HepG2 (cell line): ENCODE measurements at regions of chr2 and their contacts with region 1.

Region 1: DNA sequence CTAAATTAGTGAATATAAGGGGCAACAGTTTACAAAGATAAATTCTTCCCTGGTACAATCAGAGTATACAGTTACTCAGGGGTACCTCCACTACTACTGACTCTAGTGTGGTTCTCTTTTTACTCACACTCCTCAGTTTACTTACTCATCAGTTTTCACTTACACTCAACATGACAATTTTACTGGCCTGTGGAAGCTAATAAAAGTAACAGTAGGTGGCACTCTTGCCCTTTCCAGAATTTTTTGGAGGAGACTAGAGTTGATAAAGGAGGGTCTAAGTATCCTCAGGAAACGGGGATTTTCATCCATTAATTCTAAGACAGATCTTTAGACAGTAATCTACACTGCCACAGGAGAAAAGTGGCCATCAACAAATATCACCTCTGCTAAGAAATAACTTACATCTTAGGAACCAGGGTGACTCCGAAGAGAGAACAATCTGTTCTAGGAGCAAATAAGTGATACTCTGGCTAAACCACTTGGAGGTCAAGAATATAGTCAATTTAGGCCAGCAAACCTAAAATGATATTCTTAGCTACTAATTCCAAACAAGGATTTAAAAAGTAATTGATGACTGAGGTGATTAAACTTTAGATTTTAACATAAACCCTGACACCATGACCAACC is 61.3 kb downstream of the ATL2 start:
- DNase-seq: peak; percentile 68
- ATAC-seq: peak; percentile 82
- H3K4me3 ChIP-seq: no peak overlapping the region
- H3K27ac ChIP-seq: no peak overlapping the region
- H3K4me1 ChIP-seq: 0 out of 2 replicates have a peak, but pooled peaks cover 6% of the 10 kb centered on the region
- H3K27me3 ChIP-seq: no peaks in the 10 kb centered on the region
- CTCF ChIP-seq: peak; percentile 72
- EP300 ChIP-seq: no peak
- POLR2A ChIP-seq: no peak
- RAD21 ChIP-seq: peak; percentile 83

Region 2: GRCh38 chr2:38446420-38446819 is 130.6 kb after region 1 on chr2:
- CTCF ChIA-PET with region 1: interaction called, 6 read pairs
- POLR2A ChIA-PET with region 1: no interaction called
- in situ Hi-C with region 1: no loop called
- intact Hi-C with region 1: loop called (anchors 1 kb)
- DNase-seq: no peak
- ATAC-seq: peak; percentile 75
- H3K4me3 ChIP-seq: no peak overlapping the region
- H3K27ac ChIP-seq: no peak overlapping the region
- H3K4me1 ChIP-seq: peaks cover 10% of the 10 kb centered on the region
- H3K27me3 ChIP-seq: peaks cover 0 to 14% of the 10 kb centered on the region in 2 experiments; a peak in 3 of 5 replicates
- CTCF ChIP-seq: peak; percentile 60
- EP300 ChIP-seq: no peak
- POLR2A ChIP-seq: no peak
- RAD21 ChIP-seq: no peak

Region 3: GRCh38 chr2:38465789-38466127 is 149.9 kb after region 1 on chr2:
- CTCF ChIA-PET with region 1: interaction called, 18 read pairs
- POLR2A ChIA-PET with region 1: no interaction called
- in situ Hi-C with region 1: no loop called
- intact Hi-C with region 1: loop called (anchors 1 kb)
- DNase-seq: peak; percentile 75
- ATAC-seq: peak; percentile 91
- H3K4me3 ChIP-seq: no peak overlapping the region
- H3K27ac ChIP-seq: no peak overlapping the region
- H3K4me1 ChIP-seq: peaks cover 49% of the 10 kb centered on the region
- H3K27me3 ChIP-seq: no peaks in the 10 kb centered on the region; a peak in 2 of 5 replicates
- CTCF ChIP-seq: peak; percentile 92
- EP300 ChIP-seq: no peak
- POLR2A ChIP-seq: no peak
- RAD21 ChIP-seq: peak; percentile 88

Region 4: GRCh38 chr2:38508311-38509039 is 192.7 kb after region 1 on chr2:
- CTCF ChIA-PET with region 1: interaction called, 30 read pairs
- POLR2A ChIA-PET with region 1: no interaction called
- in situ Hi-C with region 1: loop called (anchors 5 kb)
- intact Hi-C with region 1: loop called (anchors 1 kb)
- DNase-seq: peak; percentile 95
- ATAC-seq: peak; percentile 87
- H3K4me3 ChIP-seq: no peak overlapping the region
- H3K27ac ChIP-seq: no peak overlapping the region
- H3K4me1 ChIP-seq: peaks cover 30% of the 10 kb centered on the region
- H3K27me3 ChIP-seq: no peaks in the 10 kb centered on the region
- CTCF ChIP-seq: peak; percentile 97
- EP300 ChIP-seq: 0 out of 4 replicates have a peak, but pooled peaks of 1 of the 2 experiments have one; percentile 24
- POLR2A ChIP-seq: no peak
- RAD21 ChIP-seq: peak; percentile 96

Region 5: GRCh38 chr2:38514603-38515159 is 198.9 kb after region 1 on chr2:
- CTCF ChIA-PET with region 1: no interaction called
- POLR2A ChIA-PET with region 1: no interaction called
- in situ Hi-C with region 1: loop called (anchors 5 kb)
- intact Hi-C with region 1: no loop called
- DNase-seq: no peak
- ATAC-seq: no peak
- H3K4me3 ChIP-seq: no peak overlapping the region
- H3K27ac ChIP-seq: no peak overlapping the region
- H3K4me1 ChIP-seq: peaks cover 28% of the 10 kb centered on the region
- H3K27me3 ChIP-seq: peaks cover 0 to 7% of the 10 kb centered on the region in 2 experiments; a peak in 1 of 5 replicates
- CTCF ChIP-seq: no peak
- EP300 ChIP-seq: no peak
- POLR2A ChIP-seq: no peak
- RAD21 ChIP-seq: no peak

Region 6: DNA sequence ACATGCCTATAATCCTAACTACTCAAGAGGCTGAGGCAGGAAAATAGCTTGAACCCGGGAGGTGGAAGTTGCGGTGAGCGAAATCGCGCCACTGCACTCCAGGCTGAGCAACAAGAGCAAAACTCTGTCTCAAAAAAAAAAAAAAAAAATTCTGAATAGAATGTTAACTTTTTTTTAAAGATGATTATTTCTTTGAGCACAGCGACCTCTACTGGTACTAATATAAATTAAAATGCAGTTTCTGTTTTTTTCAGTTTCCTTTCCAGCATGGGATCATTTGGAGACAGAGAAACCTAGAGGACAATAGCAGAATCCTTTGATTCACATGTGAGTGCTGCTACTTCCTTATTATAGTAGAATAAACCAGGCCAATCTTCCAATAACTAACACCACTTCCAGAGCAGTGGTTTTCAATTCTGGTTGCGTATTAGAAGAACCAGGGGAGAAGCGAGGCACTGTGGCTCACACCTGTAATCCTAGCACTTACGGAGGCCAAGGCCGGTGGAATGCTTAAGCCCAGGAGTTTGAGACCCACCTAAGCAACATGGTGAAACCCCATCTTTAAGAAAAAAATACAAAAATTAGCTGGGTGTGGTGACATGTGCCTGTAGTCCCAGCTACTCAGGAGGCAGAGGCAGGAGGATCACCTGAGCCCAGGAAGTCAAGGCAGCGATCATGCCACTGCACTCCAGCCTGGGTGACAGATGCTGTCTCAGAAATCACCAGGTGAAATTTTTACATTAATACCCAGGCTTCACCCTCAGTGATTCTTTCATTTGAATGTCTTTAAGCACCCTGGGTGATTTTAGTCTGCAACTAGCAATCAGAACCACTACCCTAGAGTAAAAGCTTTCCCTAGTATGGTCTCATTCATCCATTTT is 425.3 kb after region 1 on chr2:
- CTCF ChIA-PET with region 1: no interaction called
- POLR2A ChIA-PET with region 1: no interaction called
- in situ Hi-C with region 1: loop called (anchors 25 kb)
- intact Hi-C with region 1: loop called (anchors 5 kb)
- DNase-seq: peak; percentile 60
- ATAC-seq: peak; percentile 39
- H3K4me3 ChIP-seq: peak overlapping the region in 1 of 3 experiments; percentile 10; a peak in 2 of 6 replicates
- H3K27ac ChIP-seq: peak overlapping the region; percentile 71
- H3K4me1 ChIP-seq: peaks cover 57% of the 10 kb centered on the region
- H3K27me3 ChIP-seq: no peaks in the 10 kb centered on the region
- CTCF ChIP-seq: peak; percentile 61
- EP300 ChIP-seq: no peak
- POLR2A ChIP-seq: no peak
- RAD21 ChIP-seq: 0 out of 2 replicates have a peak, but pooled peaks have one; percentile 36